Activated T-helper 1 cell treated with anti-CD3 and anti-CD28 coated beads, Interleukin-12 subunit alpha, Interleukin-12 subunit beta, Interleukin-2, Interleukin-4 antibody, amounts not matched to agents 30 ng/mL and 10 ng/mL and 1 ng/mL, durations not matched to agents 14 hours and 24 hours and 36 hours (primary cell): ENCODE measurements at regions of chr16 and their contacts with region 1.

Region 1: GRCh38 chr16:75622761-75623605 is at the start of gene ADAT1:
- DNase-seq: peak; percentile 96
- H3K4me3 Mint-ChIP-seq: peak within 1 kb of the TSS; percentile 90
- H3K27ac Mint-ChIP-seq: peak within 1 kb of the TSS; percentile 98
- H3K4me1 Mint-ChIP-seq: peaks cover 54% of the 10 kb centered on the region
- H3K27me3 Mint-ChIP-seq: no peaks in the 10 kb centered on the region
- total RNA-seq, gene ADAT1: 59.0 and 60.9 TPM in 2 replicates

Region 2: DNA sequence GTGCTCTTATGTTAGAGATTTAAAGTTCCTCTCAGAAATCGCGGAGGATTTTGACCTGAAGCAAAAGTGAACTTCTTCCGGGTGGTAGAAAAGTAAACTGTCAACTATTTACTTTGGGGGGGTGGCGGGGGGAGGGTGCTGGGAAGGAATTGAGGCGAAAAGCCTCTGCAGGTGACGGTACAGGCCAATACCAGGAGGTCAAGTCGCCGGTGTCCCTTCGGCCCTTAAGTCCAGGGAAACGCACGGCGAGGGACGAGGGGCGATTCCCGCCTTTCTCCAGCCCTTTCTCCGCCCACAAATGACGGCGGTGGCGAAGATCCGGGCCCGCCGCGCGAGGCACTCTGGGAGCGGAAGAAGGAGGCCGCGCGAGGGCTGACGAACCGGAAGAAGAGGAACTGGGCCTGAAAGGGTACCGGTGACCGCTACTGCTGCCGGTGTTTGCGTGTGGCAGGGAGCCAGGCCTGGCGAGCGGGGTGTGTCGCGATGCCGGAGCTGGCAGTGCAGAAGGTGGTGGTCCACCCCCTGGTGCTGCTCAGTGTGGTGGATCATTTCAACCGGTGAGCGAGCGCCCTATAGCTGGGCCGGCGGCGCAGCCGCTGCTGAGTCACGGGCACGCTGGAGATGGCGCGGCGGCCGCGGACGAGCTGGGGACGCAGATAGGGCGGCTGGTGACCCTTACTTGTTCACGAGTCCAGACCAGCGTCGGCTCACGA is 1326.4 kb before region 1 on chr16 and contains the start of gene PSMD7:
- intact Hi-C with region 1: loop called (anchors 1 kb)
- DNase-seq: peak; percentile 88
- H3K4me3 Mint-ChIP-seq: peak within 1 kb of the TSS; percentile 90
- H3K27ac Mint-ChIP-seq: peak within 1 kb of the TSS; percentile 93
- H3K4me1 Mint-ChIP-seq: peaks cover 27% of the 10 kb centered on the region
- H3K27me3 Mint-ChIP-seq: no peaks in the 10 kb centered on the region
- total RNA-seq, gene PSMD7: 168 and 175 TPM in 2 replicates

Region 3: GRCh38 chr16:74984535-74985296 is 638.3 kb before region 1 on chr16 and contains the start of gene WDR59:
- intact Hi-C with region 1: loop called (anchors 10 kb)
- DNase-seq: peak; percentile 99
- H3K4me3 Mint-ChIP-seq: peak within 1 kb of the TSS; percentile 90
- H3K27ac Mint-ChIP-seq: peak within 1 kb of the TSS; percentile 90
- H3K4me1 Mint-ChIP-seq: peaks cover 14% of the 10 kb centered on the region
- H3K27me3 Mint-ChIP-seq: peaks cover 3% of the 10 kb centered on the region
- total RNA-seq, gene WDR59: 85.9 and 95.3 TPM in 2 replicates

Region 4: DNA sequence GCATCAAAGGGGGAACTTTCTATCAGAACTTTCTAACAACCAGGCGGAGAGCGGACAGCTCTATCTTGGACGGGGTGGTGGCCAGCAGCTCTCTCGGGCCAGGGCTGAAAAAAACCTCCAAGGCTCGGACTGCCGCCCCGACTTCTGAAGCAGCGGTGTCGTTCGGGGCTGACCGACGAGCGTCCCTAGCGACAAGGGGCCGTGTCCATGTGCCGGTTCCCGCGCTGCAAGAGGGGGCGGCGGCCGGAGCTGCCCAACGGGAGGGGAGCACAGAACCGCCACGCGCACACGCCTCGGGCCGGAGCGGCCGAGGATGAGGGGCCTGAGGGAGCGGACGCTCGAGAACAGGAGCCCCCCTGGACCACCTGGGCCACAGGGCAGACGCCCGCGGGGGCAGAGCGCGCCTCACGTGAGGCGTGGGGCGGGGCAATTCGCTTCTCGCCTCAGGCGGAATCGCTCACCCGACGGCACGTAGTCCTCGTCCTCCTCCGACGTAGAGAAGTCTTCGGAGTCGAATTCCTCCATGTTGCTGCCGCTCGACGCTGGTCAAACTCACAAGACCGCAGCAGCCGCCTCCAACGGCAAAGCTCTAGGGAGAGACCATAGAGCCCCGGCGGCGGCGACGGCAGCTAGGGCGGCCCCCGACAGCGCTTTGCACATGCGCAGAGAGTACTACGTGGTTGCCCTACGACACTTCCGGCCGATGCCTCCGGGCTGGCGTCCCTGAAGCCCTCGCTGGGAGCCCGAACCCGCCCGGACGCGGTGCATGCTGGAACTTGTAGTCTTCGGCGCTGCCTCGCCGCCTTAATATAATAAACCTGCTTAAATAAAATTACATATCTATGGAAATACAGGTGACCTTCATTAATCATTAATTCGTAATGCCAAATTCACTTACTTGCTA is 189.9 kb before region 1 on chr16 and contains the start of gene CFDP1:
- intact Hi-C with region 1: loop called (anchors 1 kb)
- DNase-seq: peak; percentile 93
- H3K4me3 Mint-ChIP-seq: peak within 1 kb of the TSS; percentile 85
- H3K27ac Mint-ChIP-seq: peak within 1 kb of the TSS; percentile 99
- H3K4me1 Mint-ChIP-seq: peaks cover 21% of the 10 kb centered on the region
- H3K27me3 Mint-ChIP-seq: no peaks in the 10 kb centered on the region
- total RNA-seq, gene CFDP1: 35.4 TPM in 2 replicates

Region 5: GRCh38 chr16:75555707-75556430 is 67.1 kb before region 1 on chr16 and contains the start of gene TMEM231:
- intact Hi-C with region 1: loop called (anchors 1 kb)
- DNase-seq: peak; percentile 95
- H3K4me3 Mint-ChIP-seq: peak within 1 kb of the TSS; percentile 92
- H3K27ac Mint-ChIP-seq: peak within 1 kb of the TSS; percentile 89
- H3K4me1 Mint-ChIP-seq: peaks cover 11% of the 10 kb centered on the region
- H3K27me3 Mint-ChIP-seq: peaks cover 7% of the 10 kb centered on the region
- total RNA-seq, gene TMEM231: 4.5 and 4.7 TPM in 2 replicates

Region 6: GRCh38 chr16:75703306-75703705 is 80.3 kb after region 1 on chr16:
- intact Hi-C with region 1: no loop called
- DNase-seq: no peak
- H3K4me3 Mint-ChIP-seq: no peak overlapping the region
- H3K27ac Mint-ChIP-seq: no peak overlapping the region
- H3K4me1 Mint-ChIP-seq: no peaks in the 10 kb centered on the region
- H3K27me3 Mint-ChIP-seq: no peaks in the 10 kb centered on the region

Region 7: DNA sequence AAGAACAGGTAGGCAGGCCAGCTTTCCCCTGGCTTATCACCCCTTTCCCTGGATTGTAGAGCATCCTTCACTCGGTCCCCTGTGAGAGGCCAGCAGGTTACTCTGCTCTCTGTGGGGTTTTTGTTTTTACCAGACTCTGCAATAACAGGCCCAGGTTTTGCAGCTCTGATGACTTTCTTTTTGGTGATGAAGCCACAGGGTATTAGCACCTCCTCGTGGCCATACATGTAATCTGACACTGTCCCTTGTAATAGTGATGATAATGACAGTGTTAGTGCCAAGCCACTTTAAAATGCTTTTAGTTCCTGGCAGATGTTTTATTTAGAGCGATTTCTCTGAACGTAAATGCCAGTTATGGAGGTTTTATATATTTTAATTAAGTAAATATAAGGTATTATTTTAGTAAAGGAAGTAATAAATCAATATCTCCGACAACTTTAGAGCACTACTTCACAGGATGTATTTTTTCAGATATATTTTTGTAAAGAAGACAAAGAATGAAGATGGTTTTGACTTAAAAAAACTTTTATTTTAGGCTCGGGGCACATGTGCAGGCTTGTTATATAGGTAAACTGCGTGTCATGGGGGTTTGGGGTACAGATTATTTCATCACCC is 141.3 kb after region 1 on chr16:
- intact Hi-C with region 1: loop called (anchors 1 kb)
- DNase-seq: peak; percentile 35
- H3K4me3 Mint-ChIP-seq: no peak overlapping the region
- H3K27ac Mint-ChIP-seq: no peak overlapping the region
- H3K4me1 Mint-ChIP-seq: no peaks in the 10 kb centered on the region
- H3K27me3 Mint-ChIP-seq: peaks cover 12% of the 10 kb centered on the region